Vagina (tissue), 2 donors: ENCODE measurements at regions of chr3 and their contacts with region 1.

Region 1: DNA sequence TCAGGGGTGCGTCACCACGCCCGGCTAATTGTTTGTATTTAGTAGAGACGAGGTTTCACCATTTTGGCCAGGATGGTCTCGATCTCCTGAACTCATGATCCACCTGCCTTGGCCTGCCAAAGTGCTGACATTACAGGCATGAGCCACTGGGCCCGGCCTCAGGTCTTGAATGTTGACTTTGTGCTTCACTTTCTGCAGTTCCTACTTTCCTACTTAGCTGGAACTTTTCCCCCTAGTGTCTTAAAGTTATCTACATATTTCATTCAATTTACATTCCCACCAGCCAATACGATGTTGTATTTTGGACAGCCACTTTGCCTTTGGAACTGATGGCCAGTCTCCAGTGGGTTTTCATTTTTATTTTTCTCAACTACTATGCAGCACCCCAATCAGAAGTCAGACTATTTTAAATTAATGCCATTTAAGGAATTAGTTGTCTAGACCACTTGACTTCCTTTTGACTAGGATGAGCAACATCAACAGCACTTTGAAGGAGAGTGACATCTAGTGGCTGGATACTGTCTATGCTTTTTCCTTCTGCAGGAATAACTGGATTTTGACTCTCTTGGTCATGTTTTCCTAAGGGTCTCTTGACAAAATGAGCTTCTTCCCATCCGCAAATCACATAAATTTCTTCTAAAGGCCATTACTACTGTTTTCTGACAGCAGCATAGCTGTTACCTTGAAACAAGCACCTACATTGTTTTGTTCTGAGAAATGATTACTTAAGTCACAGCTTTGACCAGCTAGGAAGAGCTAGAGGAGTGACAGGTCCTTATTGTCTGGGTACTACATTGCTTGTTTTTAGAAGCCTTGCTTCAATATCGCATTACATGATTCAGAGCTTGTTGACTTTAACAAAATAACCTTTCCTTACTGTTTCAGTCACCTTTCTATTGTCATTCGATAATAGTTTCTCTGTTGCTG is 140.2 kb downstream of the ITPR1 start:
- DNase-seq: no peak
- H3K4me3 ChIP-seq: no peak overlapping the region
- H3K27ac ChIP-seq: no peak overlapping the region
- H3K4me1 ChIP-seq: no peaks in the 10 kb centered on the region
- H3K27me3 ChIP-seq: no peaks in the 10 kb centered on the region
- CTCF ChIP-seq: peak; percentile 28 to 76 (median 64)
- POLR2A ChIP-seq: no peak

Region 2: DNA sequence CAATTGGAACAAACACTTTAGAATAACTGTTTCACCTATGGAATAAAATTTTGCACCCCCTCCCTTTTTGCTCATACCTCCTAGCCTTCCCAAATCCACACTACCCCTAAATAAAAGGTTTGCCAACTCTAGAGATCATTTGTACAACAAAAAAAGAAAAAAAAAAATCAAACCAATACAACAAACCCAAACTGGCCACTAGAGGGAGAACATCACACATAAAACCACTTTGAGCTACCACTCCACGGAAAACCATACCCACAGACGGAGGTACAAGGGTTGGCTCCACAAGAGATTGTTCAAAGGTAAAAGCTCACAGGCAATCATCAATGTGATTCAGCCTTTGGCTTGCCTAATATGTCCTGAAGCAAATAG is 282.6 kb before region 1 on chr3:
- intact Hi-C with region 1: loop called (anchors 5 kb)
- DNase-seq: no peak
- H3K4me3 ChIP-seq: peak overlapping the region in 1 of 2 donors; percentile 23
- H3K27ac ChIP-seq: no peak overlapping the region
- H3K4me1 ChIP-seq: peaks cover 4% of the 10 kb centered on the region
- H3K27me3 ChIP-seq: no peaks in the 10 kb centered on the region
- CTCF ChIP-seq: peak; percentile 50 to 83 (median 69)
- POLR2A ChIP-seq: no peak

Region 3: DNA sequence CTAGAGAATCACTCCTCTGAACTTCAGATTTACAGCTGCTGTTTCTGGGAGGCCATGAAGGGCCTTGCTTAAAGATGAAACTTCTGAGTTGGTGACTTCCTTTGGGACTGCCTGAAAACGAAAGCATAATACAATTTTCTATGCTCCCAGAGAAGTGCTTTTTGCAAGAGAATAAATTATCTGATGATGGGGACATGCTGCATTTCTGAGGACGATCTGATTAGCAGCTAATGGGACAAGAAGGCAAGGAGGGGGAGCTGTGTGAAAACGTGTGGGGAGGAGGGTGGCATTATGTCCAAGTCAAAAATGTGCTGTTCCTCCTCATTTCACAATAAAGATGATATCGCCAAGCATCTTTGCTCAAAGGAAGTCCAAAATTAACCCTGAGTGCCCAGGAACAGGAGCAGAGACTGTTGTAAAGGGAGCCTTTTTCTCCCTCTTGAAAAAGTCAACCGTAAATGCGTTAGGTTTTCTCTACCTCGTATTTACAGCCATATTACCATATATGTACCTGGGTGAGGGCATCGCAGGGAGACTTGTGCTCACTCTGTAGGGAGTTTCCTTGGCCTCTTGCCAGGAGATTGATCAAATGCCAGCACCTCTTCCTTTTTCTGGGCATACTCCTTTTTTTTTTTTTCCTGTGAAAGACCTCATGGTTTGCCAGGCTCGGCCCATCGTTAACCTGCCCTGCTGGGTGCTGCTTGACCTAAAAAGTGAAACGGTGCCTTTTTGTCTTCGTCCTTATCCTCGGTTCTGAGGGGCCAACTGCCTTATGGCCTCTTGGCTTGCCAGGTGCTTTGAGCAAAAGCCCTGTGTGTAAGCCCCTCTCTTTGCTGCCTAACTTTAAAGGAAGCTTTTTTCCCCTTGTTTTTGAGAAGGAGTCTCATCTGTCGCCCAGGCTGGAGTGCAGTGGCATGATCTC is 128.7 kb before region 1 on chr3:
- intact Hi-C with region 1: loop called (anchors 10 kb)
- DNase-seq: no peak
- H3K4me3 ChIP-seq: peak overlapping the region; percentile 7 to 20
- H3K27ac ChIP-seq: peak overlapping the region; percentile 60
- H3K4me1 ChIP-seq: peaks cover 18% of the 10 kb centered on the region
- H3K27me3 ChIP-seq: no peaks in the 10 kb centered on the region
- CTCF ChIP-seq: no peak
- POLR2A ChIP-seq: no peak